ENCODE measurements at regions of chr4 and their contacts with region 1.

Region 1: DNA sequence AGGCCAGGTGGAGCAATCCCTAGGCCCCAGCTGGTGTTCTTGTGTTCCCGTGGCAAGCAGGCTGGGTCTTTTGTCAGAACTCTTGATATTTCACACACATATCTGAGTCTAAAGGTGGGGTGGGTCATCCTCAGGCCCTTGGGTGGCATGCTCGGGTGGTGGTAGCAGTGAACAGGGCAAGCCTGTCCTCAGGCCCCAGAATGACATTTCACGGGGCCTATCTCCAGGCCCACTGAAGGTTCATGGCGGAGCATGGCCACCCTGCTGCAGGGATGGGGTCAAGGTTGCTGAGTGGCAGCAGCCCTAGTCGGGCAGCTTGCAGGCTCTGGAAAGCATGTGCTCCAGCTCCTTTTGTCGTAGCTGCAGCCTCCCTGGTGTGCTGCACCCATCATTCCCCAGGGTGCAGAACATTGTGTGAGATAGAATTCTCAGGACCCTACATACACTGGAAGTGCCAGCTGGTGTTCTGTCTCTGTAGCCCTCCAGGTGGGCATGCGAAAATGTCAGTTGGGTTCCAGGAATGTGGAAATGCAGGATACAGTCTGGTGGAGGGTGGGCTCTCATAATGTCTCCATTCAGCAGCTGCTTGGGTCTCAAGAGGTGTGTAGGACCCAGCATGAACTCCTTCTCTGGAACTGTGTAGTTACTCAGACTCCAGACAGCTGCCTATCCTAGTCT is 1571.8 kb downstream of the STIM2 start:
- DNase-seq: no peak
- H3K4me3 ChIP-seq: no peak overlapping the region
- H3K27ac ChIP-seq: no peak overlapping the region
- H3K4me1 ChIP-seq: no peaks in the 10 kb centered on the region
- H3K27me3 ChIP-seq: no peaks in the 10 kb centered on the region
- CTCF ChIP-seq: no peak
- EP300 ChIP-seq: no peak
- POLR2A ChIP-seq: no peak

Region 2: GRCh38 chr4:28001698-28002097 is 430.8 kb before region 1 on chr4:
- intact Hi-C with region 1: loop called in 1 of 4 experiments (anchors 5 kb)
- DNase-seq: no peak
- H3K4me3 ChIP-seq: no peak overlapping the region
- H3K27ac ChIP-seq: no peak overlapping the region
- H3K4me1 ChIP-seq: no peaks in the 10 kb centered on the region
- H3K27me3 ChIP-seq: no peaks in the 10 kb centered on the region
- CTCF ChIP-seq: no peak
- EP300 ChIP-seq: no peak
- POLR2A ChIP-seq: no peak

Measured in ovary (tissue), 10 donors.